Activated CD4-positive, alpha-beta T cell treated with anti-CD3 and anti-CD28 coated beads for 36 hours (primary cell): ENCODE measurements at regions of chr6 and their contacts with region 1.

Region 1: GRCh38 chr6:32255199-32256153 is 31.6 kb upstream of the NOTCH4 start:
- DNase-seq: peak; percentile 84
- ATAC-seq: peak; percentile 90
- H3K4me3 Mint-ChIP-seq: peak overlapping the region; percentile 43
- H3K27ac Mint-ChIP-seq: peak overlapping the region; percentile 76
- H3K4me1 Mint-ChIP-seq: peaks cover 33% of the 10 kb centered on the region
- H3K27me3 Mint-ChIP-seq: peaks cover 8% of the 10 kb centered on the region

Region 2: DNA sequence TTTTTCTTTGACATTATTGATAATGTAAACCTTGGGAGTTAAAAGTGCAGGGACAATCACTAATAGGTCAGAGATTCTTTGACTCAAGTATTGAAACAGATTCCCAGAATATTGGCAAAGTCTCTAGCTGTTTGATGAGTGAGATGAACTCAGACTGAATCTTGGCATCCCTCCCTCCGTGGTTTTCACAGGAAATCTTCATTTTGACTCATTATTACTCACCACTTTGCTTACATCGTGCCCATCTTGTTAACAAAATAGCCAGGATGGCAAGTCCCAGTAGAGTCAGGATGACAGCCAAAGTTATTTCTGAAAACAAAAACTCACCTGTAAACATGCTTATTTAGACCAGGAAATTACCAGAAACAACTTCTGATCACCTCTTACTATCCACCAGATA is 114.2 kb after region 1 on chr6:
- CTCF ChIA-PET with region 1: no interaction called
- POLR2A ChIA-PET with region 1: no interaction called
- intact Hi-C with region 1: loop called in 1 of 2 experiments (anchors 2 kb)
- DNase-seq: peak; percentile 61
- ATAC-seq: peak; percentile 84
- H3K4me3 Mint-ChIP-seq: no peak overlapping the region
- H3K27ac Mint-ChIP-seq: no peak overlapping the region
- H3K4me1 Mint-ChIP-seq: peaks cover 12% of the 10 kb centered on the region
- H3K27me3 Mint-ChIP-seq: peaks cover 31% of the 10 kb centered on the region